Activated T-helper 1 cell treated with anti-CD3 and anti-CD28 coated beads, Interleukin-12 subunit alpha, Interleukin-12 subunit beta, Interleukin-2, Interleukin-4 antibody, amounts not matched to agents 30 ng/mL and 10 ng/mL and 1 ng/mL, durations not matched to agents 14 hours and 24 hours and 36 hours (primary cell): ENCODE measurements at regions of chr2 and their contacts with region 1.

Region 1: DNA sequence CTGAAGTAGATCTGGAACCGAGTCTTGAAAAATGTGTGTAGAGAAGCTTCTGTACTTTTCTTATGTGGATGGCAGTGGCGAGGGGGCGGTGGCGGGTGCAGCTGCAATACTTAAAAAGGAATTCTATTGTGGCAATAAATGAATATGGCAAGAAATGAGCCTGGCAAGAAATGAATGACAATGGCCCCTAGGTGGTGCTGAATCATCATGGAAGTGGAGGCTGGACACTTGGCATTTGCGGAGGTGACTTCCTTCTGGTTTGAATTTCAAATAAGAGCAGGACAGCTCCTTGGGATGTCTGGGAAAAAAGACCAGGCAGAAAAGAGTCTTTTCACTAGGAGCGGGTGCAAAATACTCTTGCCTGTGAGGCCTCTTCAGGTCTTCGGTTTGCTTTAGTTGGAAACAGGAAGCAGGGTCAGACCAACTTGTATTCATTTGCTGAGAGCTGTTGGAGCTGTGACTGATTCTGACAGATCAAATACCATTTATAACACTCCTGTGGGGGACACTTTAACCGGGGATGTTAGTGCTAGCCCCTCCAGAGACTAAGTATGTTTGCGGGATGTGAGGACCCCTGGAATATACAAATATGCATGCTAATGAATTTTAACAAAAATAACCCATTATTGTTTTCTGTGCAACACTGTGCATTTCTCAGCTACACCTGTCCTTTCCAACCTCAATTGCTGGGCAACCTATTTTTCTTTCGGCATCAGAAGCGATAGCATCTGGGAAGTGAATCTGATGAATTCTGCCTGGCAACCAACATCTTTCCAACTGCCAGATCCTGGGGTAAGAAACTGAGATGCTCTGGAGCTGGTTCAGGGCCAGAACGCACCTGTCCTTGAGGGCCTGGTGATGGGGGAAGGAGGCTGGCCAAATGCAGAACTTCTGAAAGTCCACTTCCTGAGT is 35.4 kb downstream of the FASTKD2 start:
- DNase-seq: peak; percentile 28
- H3K4me3 Mint-ChIP-seq: peak overlapping the region; percentile 49
- H3K27ac Mint-ChIP-seq: peak overlapping the region; percentile 61
- H3K4me1 Mint-ChIP-seq: peaks cover 20% of the 10 kb centered on the region
- H3K27me3 Mint-ChIP-seq: no peaks in the 10 kb centered on the region

Region 2: DNA sequence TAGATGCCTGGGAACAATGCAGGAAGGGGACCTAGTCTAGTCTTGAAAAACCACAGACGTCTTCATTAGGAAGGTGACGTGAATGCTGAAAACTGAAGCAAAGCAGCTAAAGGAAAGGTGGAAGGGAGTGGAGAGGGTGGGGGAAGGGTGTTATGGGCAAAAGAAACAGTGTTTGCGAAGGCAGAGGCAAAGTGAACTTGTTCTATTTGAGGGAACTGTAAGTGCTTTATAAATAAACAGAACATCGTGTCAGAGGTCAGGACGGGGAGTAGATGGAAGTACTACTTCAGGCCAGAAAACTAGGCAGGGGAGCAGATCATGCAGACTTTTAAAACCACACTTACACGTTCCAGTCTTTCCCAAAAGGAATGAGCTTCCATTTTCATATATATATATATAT is 22.4 kb after region 1 on chr2:
- intact Hi-C with region 1: no loop called
- DNase-seq: no peak
- H3K4me3 Mint-ChIP-seq: no peak overlapping the region
- H3K27ac Mint-ChIP-seq: no peak overlapping the region
- H3K4me1 Mint-ChIP-seq: no peaks in the 10 kb centered on the region
- H3K27me3 Mint-ChIP-seq: peaks cover 4% of the 10 kb centered on the region

Region 3: GRCh38 chr2:206981739-206982340 is 181.1 kb after region 1 on chr2:
- intact Hi-C with region 1: loop called (anchors 10 kb)
- DNase-seq: peak; percentile 9
- H3K4me3 Mint-ChIP-seq: no peak overlapping the region
- H3K27ac Mint-ChIP-seq: no peak overlapping the region
- H3K4me1 Mint-ChIP-seq: peaks cover 13% of the 10 kb centered on the region
- H3K27me3 Mint-ChIP-seq: no peaks in the 10 kb centered on the region

Region 4: DNA sequence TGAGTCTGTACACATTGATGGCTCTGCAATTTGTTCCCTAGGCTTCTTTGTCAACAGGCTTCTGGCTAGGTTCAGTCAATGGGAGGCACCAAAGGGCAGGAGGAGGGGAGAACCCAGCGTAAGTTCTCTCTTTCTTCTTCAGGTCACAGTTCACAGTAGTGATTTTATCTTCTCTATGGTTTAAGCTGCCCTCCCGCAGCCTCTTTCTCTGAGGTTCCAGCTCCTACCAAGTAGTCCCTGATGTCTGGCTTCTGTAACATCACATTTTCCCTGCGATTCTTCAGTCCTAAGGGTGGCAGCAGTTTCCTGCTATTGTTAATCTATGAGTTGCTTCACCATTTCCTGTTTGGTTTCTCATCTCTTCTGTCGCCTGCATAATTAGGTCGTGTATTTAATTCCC is 246.0 kb after region 1 on chr2:
- intact Hi-C with region 1: loop called (anchors 10 kb)
- DNase-seq: peak; percentile 6
- H3K4me3 Mint-ChIP-seq: no peak overlapping the region
- H3K27ac Mint-ChIP-seq: no peak overlapping the region
- H3K4me1 Mint-ChIP-seq: peaks cover 15% of the 10 kb centered on the region
- H3K27me3 Mint-ChIP-seq: peaks cover 2% of the 10 kb centered on the region